ENCODE measurements at regions of chr18 and their contacts with region 1.

Region 1: GRCh38 chr18:49751427-49752094 is 61.8 kb downstream of the ACAA2 start:
- DNase-seq: no peak
- H3K4me3 ChIP-seq: no peak overlapping the region
- H3K27ac ChIP-seq: no peak overlapping the region
- H3K4me1 ChIP-seq: no peaks in the 10 kb centered on the region
- H3K27me3 ChIP-seq: no peaks in the 10 kb centered on the region
- CTCF ChIP-seq: no peak

Region 2: DNA sequence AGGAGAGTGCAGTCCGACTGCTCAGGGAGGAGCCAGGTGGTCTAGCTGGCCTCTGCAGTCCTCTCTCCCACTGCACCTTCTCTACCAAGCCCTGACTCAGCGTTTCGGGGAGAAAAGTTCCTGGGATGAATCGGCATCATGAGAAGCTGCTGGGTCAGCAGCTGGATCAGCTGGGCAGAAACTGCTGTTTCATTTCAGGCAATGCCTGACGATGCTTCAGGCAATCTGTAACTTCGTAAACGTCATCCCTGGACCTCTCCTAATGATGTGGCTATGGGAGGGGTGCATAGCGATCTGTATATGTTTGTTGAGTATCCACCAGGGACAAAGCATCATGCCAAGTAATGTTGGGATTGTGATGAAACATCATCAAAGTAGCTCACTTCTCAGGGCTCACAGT is 169.0 kb before region 1 on chr18:
- CTCF ChIA-PET with region 1: interaction called, 10 read pairs
- POLR2A ChIA-PET with region 1: no interaction called
- intact Hi-C with region 1: no loop called
- DNase-seq: no peak
- H3K4me3 ChIP-seq: no peak overlapping the region
- H3K27ac ChIP-seq: no peak overlapping the region
- H3K4me1 ChIP-seq: no peaks in the 10 kb centered on the region
- H3K27me3 ChIP-seq: no peaks in the 10 kb centered on the region
- CTCF ChIP-seq: no peak